HCT116 (cell line): ENCODE measurements at regions of chr15 and their contacts with region 1.

Region 1: GRCh38 chr15:75453703-75454470 is 2.4 kb upstream of the SIN3A start:
- DNase-seq: peak; percentile 100
- ATAC-seq: peak; percentile 41
- H3K4me3 ChIP-seq: peak overlapping the region; percentile 92 to 97
- H3K27ac ChIP-seq: peak overlapping the region; percentile 89
- H3K4me1 ChIP-seq: peaks cover 6 to 40% of the 10 kb centered on the region in 2 experiments
- H3K27me3 ChIP-seq: no peaks in the 10 kb centered on the region
- CTCF ChIP-seq: no peak
- POLR2A ChIP-seq: peak; percentile 35
- RAD21 ChIP-seq: no peak

Region 2: GRCh38 chr15:75360391-75360790 is 93.5 kb before region 1 on chr15:
- CTCF ChIA-PET with region 1: no interaction called
- POLR2A ChIA-PET with region 1: no interaction called
- RAD21 ChIA-PET with region 1: no interaction called
- intact Hi-C with region 1: no loop called
- DNase-seq: no peak
- ATAC-seq: no peak
- H3K4me3 ChIP-seq: no peak overlapping the region
- H3K27ac ChIP-seq: no peak overlapping the region
- H3K4me1 ChIP-seq: no peaks in the 10 kb centered on the region
- H3K27me3 ChIP-seq: no peaks in the 10 kb centered on the region
- CTCF ChIP-seq: no peak
- POLR2A ChIP-seq: no peak
- RAD21 ChIP-seq: no peak

Region 3: GRCh38 chr15:75468913-75469598 is 15.2 kb after region 1 on chr15:
- CTCF ChIA-PET with region 1: no interaction called
- POLR2A ChIA-PET with region 1: interaction called, 24 read pairs
- RAD21 ChIA-PET with region 1: interaction called in 1 of 2 experiments, 5 read pairs
- intact Hi-C with region 1: no loop called
- DNase-seq: no peak
- ATAC-seq: no peak
- H3K4me3 ChIP-seq: no peak overlapping the region
- H3K27ac ChIP-seq: no peak overlapping the region
- H3K4me1 ChIP-seq: no peaks in the 10 kb centered on the region; a peak in 1 of 4 replicates
- H3K27me3 ChIP-seq: no peaks in the 10 kb centered on the region
- CTCF ChIP-seq: no peak
- POLR2A ChIP-seq: no peak
- RAD21 ChIP-seq: no peak

Region 4: DNA sequence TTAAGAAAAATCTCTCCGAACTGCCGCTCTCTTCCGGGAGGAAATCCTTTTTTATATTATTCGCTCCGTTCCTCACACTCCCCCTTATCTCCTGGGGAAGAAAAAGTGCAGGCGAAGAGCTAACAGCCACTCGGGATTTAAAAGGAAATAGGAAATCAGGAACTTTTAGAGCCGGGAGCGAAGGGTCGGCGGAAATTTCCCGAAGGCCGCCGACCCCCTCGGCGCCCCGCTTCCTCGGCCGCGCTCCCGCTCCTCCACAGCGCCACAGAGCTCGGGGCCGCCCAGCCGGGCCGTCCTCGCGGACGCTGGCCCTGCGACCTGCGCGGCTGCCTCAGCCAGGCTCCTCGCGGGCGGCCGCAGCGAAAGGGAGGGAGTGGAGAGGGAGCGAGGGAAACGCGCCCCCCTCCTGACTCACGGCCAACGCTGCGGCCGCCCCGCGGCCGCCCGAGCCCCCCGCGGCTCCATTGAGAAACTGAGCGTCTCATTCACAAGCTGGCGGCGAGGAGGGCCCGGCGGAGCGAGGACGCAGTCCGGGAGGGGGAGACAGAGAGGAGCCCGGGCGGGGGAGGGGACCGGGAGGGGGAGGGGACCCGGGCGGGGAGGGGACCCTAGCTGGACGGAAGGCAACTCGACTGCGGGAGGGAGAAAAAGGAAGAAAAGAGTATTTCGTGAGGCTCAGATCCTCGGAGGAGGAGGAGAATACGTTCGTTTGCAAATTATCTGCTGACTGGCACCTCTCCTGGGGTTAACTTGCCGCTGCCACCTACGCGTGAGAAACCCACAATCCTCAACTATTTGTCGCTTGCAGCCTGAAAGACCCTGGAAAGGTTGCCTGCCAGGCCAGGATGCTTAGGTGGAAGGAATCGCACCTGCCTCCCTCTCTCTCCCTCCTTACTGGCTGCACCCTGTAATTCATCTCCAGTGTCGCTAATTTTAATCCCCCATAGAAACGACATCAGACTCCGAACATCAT is 125.3 kb after region 1 on chr15 and contains the start of gene PTPN9:
- CTCF ChIA-PET with region 1: interaction called, 6 read pairs
- POLR2A ChIA-PET with region 1: no interaction called
- RAD21 ChIA-PET with region 1: no interaction called
- intact Hi-C with region 1: loop called (anchors 5 kb)
- DNase-seq: peak; percentile 23
- ATAC-seq: peak; percentile 84
- H3K4me3 ChIP-seq: peak within 1 kb of the TSS; percentile 86 to 93
- H3K27ac ChIP-seq: peak within 1 kb of the TSS; percentile 91
- H3K4me1 ChIP-seq: peaks cover 5 to 16% of the 10 kb centered on the region in 2 experiments
- H3K27me3 ChIP-seq: no peaks in the 10 kb centered on the region
- CTCF ChIP-seq: peak in 2 of 3 experiments; percentile 13 to 37; a peak in 2 of 6 replicates
- POLR2A ChIP-seq: peak; percentile 38
- RAD21 ChIP-seq: 0 out of 2 replicates have a peak, but pooled peaks have one; percentile 15
- total RNA-seq, gene PTPN9: 21.1 TPM

Region 5: DNA sequence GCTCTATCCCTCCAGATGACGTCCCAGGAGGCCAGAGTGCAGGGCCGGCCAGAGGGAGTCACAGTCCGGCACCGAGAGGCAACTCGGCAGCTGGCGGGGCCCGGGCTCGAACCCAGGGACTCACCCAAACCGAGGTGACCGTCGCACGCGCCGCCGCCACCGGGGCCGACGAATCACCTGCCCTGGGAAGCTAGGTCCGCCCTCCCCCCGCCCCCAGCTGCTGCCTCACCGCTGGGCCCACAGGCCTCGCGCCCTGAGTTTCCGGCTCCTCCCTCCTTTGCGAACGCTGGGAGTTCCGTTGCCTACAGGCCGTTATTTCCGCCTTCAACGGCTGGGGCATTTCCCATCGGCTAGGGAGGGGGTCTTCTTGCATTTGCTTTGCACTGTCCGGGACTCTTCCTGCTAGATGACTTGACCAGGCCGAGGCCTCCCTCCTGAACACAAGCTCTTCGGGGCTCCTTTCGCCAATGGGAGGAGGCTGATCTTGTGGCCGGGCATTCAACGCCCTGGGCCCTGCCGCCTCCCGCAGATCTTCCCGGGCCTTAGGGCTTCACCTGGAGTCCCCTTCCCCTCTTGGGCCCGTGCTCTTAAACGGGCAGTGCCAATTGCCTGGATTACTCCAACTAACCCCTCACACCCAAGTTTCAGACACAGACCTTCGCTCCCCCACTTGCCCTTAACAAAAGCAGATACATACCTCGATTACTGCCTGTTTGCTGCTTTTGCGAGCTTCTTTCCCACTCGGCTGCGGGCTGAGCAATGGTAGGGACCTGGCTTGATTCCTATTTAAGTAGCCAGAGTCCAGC is 171.9 kb after region 1 on chr15 and contains the start of gene SNUPN:
- CTCF ChIA-PET with region 1: interaction called, 3 read pairs
- POLR2A ChIA-PET with region 1: interaction called, 8 read pairs
- RAD21 ChIA-PET with region 1: no interaction called
- intact Hi-C with region 1: loop called (anchors 2 kb)
- DNase-seq: peak; percentile 90
- ATAC-seq: peak; percentile 83
- H3K4me3 ChIP-seq: peak within 1 kb of the TSS; percentile 91 to 99
- H3K27ac ChIP-seq: peak within 1 kb of the TSS; percentile 99
- H3K4me1 ChIP-seq: peaks cover 16 to 40% of the 10 kb centered on the region in 2 experiments
- H3K27me3 ChIP-seq: no peaks in the 10 kb centered on the region
- CTCF ChIP-seq: no peak
- POLR2A ChIP-seq: peak; percentile 87
- RAD21 ChIP-seq: no peak
- total RNA-seq, gene SNUPN: 29.8 TPM